PC-3 (cell line): ENCODE measurements at regions of chr12 and their contacts with region 1.

Region 1: DNA sequence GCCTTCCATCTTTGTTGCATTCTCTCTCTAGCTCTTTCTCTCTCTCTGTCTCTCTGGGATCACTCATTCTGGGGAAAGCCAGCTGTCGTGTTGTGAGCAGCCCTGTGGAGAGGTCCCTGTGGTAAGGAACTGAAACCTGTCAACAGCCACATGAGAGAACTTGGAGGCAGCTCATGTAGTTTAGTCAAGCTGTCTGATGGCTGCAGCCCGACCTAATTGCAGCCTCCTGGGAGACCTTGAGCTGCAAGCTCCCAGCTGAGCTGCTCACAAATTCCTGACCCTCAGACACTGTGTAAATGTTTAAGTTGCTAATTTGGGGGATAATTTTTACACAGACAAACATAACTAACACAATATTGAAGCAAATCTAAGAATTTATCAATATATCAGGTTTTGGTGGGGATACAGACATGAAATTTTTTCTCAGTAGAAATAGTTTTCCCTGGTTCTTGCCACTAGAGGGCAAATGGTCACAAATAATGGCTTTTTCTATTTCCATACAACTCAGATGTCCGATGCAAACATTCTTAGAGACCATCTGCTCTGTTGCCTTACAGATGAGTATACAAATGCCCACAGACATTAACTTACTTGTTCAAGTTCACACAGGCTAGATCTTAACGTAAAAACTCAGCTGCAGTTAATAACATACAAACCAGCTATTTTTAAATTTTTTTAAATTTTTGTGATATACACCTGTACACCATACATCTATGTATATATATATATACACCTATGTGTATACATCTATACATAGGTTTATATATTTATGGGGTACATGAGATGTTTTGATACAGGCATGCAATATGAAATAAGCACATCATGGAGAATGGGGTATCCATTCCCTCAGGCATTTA is 15.5 kb upstream of the KRR1 start:
- DNase-seq: peak; percentile 75
- ATAC-seq: peak; percentile 76
- H3K4me3 ChIP-seq: no peak overlapping the region
- H3K27ac ChIP-seq: no peak overlapping the region
- H3K4me1 ChIP-seq: no peaks in the 10 kb centered on the region; the same call in 1 of the 2 replicates
- H3K27me3 ChIP-seq: no peaks in the 10 kb centered on the region
- CTCF ChIP-seq: peak; percentile 87

Region 2: DNA sequence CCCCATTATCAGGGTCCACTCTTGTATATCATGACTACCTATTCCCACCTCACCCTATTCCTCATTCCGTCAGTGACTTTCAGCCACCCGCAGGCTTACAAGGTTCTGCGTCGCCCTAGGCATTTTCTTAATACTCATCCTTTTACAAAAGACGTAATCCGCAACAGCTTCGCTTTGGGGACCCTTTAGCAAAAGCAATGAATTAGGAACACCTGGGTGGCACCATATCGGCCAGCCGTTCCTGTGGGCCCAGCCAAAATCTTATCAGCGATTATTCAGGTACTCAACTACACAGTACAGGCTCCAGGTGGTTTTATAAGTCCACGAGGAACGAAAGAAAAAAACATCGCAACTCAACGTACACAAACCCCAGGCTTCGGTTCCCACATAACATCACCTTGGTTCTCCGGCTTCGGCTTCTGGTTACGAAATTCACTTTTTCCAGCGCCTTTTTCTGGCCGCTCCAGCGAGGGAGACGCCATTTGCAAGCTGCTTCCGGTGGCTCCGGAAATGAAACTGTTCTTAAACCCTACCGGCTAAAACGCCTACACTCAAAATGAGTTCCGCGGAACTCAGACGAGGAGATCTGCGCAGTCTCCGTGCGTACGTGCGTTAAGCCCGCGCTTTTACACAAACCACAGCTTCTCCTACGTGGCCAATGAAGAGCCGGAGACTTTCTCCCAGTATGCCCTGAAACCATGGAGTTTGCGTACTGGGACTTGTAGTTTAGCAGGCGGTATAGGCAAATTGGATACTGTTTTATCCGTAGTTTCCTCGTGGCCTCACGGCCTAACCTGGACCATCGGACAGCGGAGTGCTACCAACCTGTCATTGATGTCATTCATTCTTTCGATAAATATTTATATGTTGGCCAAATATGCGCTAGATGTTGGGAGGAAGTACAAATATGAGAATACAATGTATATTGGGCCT is 15.5 kb before region 1 on chr12 and contains the start of gene KRR1:
- CTCF ChIA-PET with region 1: no interaction called
- POLR2A ChIA-PET with region 1: no interaction called
- intact Hi-C with region 1: no loop called
- DNase-seq: peak; percentile 98
- ATAC-seq: peak; percentile 97
- H3K4me3 ChIP-seq: peak within 1 kb of the TSS; percentile 87
- H3K27ac ChIP-seq: 0 out of 2 replicates have a peak within 1 kb of the TSS, but pooled peaks have one; percentile 16
- H3K4me1 ChIP-seq: peaks cover 16% of the 10 kb centered on the region; the same call in 1 of the 2 replicates
- H3K27me3 ChIP-seq: no peaks in the 10 kb centered on the region
- CTCF ChIP-seq: no peak
- total RNA-seq, gene KRR1: 49.9 and 68.4 TPM in 2 replicates

Region 3: DNA sequence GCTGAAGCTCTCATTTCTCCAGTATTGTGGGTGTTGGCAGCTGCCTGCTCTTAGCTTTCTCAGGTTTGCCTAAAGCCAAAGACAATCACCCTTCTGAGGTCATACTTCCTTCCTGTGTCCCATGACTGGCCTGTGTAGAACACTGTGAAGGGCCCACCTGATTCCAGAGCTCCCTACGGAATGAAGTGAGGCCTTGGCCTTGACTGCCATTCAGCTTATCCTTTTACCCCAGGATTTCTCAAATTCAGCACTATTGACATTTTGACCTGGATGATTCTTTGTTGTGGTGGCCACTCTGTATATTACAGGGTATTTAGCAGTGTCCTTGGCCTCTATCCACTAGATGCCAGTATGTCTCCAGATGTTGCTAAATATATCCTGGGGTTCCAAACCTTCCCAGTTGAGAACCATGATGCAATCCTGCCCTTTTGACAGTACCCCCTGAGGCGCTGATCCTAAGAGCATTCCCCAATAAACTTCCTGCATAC is 96.8 kb after region 1 on chr12:
- CTCF ChIA-PET with region 1: no interaction called
- POLR2A ChIA-PET with region 1: no interaction called
- intact Hi-C with region 1: loop called (anchors 5 kb)
- DNase-seq: peak; percentile 54
- ATAC-seq: peak; percentile 84
- H3K4me3 ChIP-seq: no peak overlapping the region
- H3K27ac ChIP-seq: no peak overlapping the region
- H3K4me1 ChIP-seq: peaks cover 10% of the 10 kb centered on the region; the same call in 1 of the 2 replicates
- H3K27me3 ChIP-seq: no peaks in the 10 kb centered on the region
- CTCF ChIP-seq: peak; percentile 62

Region 4: DNA sequence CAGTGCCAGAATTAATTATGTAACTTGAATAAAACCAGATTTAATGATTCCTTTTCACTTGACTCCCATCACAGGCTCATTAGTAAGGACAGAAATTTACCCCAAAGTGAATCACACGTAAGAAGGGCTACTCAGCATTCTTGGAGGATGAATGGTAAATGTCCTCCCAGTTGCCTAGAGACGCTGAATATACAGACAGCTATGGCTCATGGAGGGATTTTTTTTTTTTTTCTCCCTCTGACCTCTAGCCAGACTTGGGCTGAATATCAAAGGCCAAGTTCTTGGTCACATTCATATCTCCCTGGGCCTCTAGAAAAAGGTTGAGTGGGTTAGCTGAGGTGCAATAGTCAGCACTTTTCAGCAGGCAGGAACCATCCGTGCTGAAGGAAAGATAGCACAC is 427.2 kb after region 1 on chr12:
- CTCF ChIA-PET with region 1: no interaction called
- POLR2A ChIA-PET with region 1: no interaction called
- intact Hi-C with region 1: loop called (anchors 10 kb)
- DNase-seq: peak; percentile 96
- ATAC-seq: peak; percentile 77
- H3K4me3 ChIP-seq: no peak overlapping the region
- H3K27ac ChIP-seq: peak overlapping the region; percentile 89
- H3K4me1 ChIP-seq: peaks cover 49% of the 10 kb centered on the region
- H3K27me3 ChIP-seq: no peaks in the 10 kb centered on the region
- CTCF ChIP-seq: no peak

Region 5: DNA sequence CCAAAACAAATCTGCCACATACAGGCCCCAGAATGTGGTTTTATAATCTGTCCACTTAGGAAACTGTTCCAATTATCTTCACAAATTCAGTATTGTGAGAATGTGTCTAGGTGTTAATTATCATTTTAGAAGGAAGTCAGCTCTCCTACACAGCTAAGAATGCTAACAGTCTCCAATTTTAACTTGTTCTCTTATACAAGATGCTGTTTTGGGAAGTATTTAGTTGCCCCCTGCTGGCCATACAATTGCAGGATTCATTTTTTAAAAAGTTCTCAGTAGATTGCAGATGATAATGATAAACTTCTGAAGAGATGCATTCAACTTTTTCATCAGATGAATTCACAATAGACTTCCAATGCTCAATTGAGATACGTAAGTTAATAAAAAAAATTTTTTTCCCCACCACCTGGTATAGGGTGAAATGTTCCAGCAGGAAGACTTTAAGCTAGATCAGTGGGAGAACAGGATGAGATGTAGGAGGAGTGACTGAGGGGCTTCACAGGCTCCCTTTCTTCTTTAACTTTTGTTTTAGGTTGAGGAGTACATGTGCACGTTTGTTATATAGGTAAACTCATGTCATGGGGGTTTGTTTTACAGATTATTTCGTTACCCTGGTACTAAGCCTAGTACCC is 1060.0 kb after region 1 on chr12:
- CTCF ChIA-PET with region 1: interaction called, 4 read pairs
- POLR2A ChIA-PET with region 1: no interaction called
- intact Hi-C with region 1: loop called (anchors 5 kb)
- DNase-seq: peak; percentile 60
- ATAC-seq: peak; percentile 43
- H3K4me3 ChIP-seq: no peak overlapping the region
- H3K27ac ChIP-seq: no peak overlapping the region
- H3K4me1 ChIP-seq: peaks cover 6% of the 10 kb centered on the region
- H3K27me3 ChIP-seq: no peaks in the 10 kb centered on the region
- CTCF ChIP-seq: peak; percentile 89